Activated naive CD4-positive, alpha-beta T cell treated with anti-CD3 and anti-CD28 coated beads for 36 hours (primary cell): ENCODE measurements at regions of chr5 and their contacts with region 1.

Region 1: GRCh38 chr5:112968411-112969106 is 8.0 kb upstream of the DCP2 start:
- DNase-seq: no peak
- H3K4me3 Mint-ChIP-seq: no peak overlapping the region
- H3K27ac Mint-ChIP-seq: no peak overlapping the region
- H3K4me1 Mint-ChIP-seq: peaks cover 18% of the 10 kb centered on the region
- H3K27me3 Mint-ChIP-seq: no peaks in the 10 kb centered on the region

Region 2: DNA sequence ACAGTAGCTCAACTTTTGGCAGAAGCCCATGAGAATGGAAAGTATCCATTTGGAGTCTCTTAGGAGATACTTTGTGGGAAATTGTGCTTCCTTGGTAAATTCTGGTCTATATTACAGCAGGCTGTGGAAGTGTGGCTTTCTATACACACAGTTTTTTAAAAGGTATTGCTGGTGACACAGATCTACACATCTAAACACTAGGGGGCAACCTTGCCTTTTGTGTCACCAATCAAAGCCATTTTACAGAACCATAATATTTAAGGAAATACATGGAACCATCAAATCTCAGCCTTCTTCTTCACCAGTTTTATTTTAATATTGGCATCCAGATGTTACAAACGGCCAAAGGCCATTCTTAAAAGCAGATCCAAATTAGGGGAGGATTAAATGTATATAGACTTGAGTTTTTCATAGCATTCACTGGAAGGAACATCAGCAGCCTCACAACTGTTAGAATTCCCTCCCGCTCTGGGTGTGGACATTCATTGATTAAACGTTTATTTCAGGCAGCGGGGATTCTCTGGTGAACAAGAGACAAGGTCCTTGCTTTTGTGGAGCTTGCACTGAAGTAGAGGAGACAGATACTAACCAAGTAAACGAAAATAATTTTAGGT is 417.0 kb before region 1 on chr5:
- CTCF ChIA-PET with region 1: interaction called, 4 read pairs
- intact Hi-C with region 1: loop called (anchors 1 kb)
- DNase-seq: peak; percentile 45
- H3K4me3 Mint-ChIP-seq: no peak overlapping the region
- H3K27ac Mint-ChIP-seq: no peak overlapping the region
- H3K4me1 Mint-ChIP-seq: no peaks in the 10 kb centered on the region
- H3K27me3 Mint-ChIP-seq: no peaks in the 10 kb centered on the region

Region 3: GRCh38 chr5:112757468-112758208 is 210.9 kb before region 1 on chr5:
- CTCF ChIA-PET with region 1: no interaction called
- intact Hi-C with region 1: loop called (anchors 1 kb)
- DNase-seq: no peak
- H3K4me3 Mint-ChIP-seq: no peak overlapping the region
- H3K27ac Mint-ChIP-seq: no peak overlapping the region
- H3K4me1 Mint-ChIP-seq: peaks cover 2% of the 10 kb centered on the region
- H3K27me3 Mint-ChIP-seq: no peaks in the 10 kb centered on the region

Region 4: GRCh38 chr5:112878760-112879159 is 89.8 kb before region 1 on chr5:
- CTCF ChIA-PET with region 1: no interaction called
- intact Hi-C with region 1: loop called (anchors 1 kb)
- DNase-seq: peak; percentile 80
- H3K4me3 Mint-ChIP-seq: no peak overlapping the region
- H3K27ac Mint-ChIP-seq: peak overlapping the region; percentile 71
- H3K4me1 Mint-ChIP-seq: peaks cover 27% of the 10 kb centered on the region
- H3K27me3 Mint-ChIP-seq: no peaks in the 10 kb centered on the region

Region 5: DNA sequence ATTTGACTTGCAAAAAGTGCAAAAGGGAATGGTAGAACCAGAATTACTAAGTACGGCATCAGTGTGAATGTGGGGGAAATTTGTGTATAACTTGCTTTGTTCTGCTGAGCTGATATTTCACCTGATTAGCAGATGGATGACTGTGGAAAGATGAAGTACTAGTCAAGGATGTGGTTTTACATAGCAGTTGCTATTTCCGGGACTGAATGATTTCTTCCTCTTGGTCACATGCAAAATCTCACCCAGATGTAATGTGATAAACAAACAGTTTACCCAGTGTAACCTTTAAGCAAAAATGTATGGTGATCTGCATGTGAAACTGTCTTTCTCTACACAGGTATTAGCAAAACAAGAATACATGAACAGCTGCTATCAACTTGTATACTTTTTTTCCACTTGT is 54.1 kb after region 1 on chr5:
- CTCF ChIA-PET with region 1: no interaction called
- intact Hi-C with region 1: loop called (anchors 1 kb)
- DNase-seq: no peak
- H3K4me3 Mint-ChIP-seq: no peak overlapping the region
- H3K27ac Mint-ChIP-seq: peak overlapping the region; percentile 60
- H3K4me1 Mint-ChIP-seq: peaks cover 49% of the 10 kb centered on the region
- H3K27me3 Mint-ChIP-seq: no peaks in the 10 kb centered on the region